OCI-LY7 (cell line): ENCODE measurements at regions of chr3 and their contacts with region 1.

Region 1: DNA sequence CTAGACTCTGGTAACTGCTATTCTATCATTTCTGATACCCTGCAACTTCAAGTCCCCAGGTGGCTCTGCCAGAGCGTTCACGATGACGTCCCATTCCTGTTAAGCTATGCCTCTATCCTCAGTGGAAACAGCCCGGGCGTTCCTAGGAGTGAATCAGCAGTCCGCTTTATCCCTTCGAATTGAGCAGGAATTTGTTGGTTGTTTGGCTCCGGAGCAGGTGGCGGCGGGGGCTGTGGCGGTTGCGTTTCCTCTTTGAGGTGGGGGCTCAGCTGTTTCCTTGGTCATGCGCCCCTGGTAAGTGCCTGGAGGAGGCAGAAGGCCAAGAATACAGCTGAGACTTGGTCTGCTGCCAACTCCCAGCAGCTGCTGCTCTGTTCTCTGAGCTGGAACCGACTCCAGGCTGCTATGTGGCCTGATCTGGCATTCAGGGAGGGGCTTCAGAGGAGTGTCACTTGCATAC is 25.2 kb downstream of the ARPP21 start:
- DNase-seq: peak; percentile 97
- H3K4me3 ChIP-seq: peak overlapping the region; percentile 49
- H3K27ac ChIP-seq: peak overlapping the region; percentile 92
- H3K4me1 ChIP-seq: peaks cover 82% of the 10 kb centered on the region
- CTCF ChIP-seq: no peak

Region 2: GRCh38 chr3:34869696-34870095 is 794.8 kb before region 1 on chr3:
- CTCF ChIA-PET with region 1: no interaction called
- POLR2A ChIA-PET with region 1: no interaction called
- intact Hi-C with region 1: loop called (anchors 10 kb)
- DNase-seq: no peak
- H3K4me3 ChIP-seq: no peak overlapping the region
- H3K27ac ChIP-seq: no peak overlapping the region
- H3K4me1 ChIP-seq: peaks cover 7% of the 10 kb centered on the region
- CTCF ChIP-seq: no peak

Region 3: GRCh38 chr3:35639254-35640186 is 25.0 kb before region 1 on chr3 and contains the start of gene ARPP21:
- CTCF ChIA-PET with region 1: interaction called, 3 read pairs
- POLR2A ChIA-PET with region 1: no interaction called
- intact Hi-C with region 1: loop called (anchors 2 kb)
- DNase-seq: peak; percentile 61
- H3K4me3 ChIP-seq: peak within 1 kb of the TSS; percentile 68
- H3K27ac ChIP-seq: no peak within 1 kb of the TSS
- H3K4me1 ChIP-seq: peaks cover 38% of the 10 kb centered on the region
- CTCF ChIP-seq: no peak
- total RNA-seq, gene ARPP21: 0.88 and 1.0 TPM in 2 replicates

Region 4: GRCh38 chr3:35678643-35679161 is 14.2 kb after region 1 on chr3:
- CTCF ChIA-PET with region 1: no interaction called
- POLR2A ChIA-PET with region 1: interaction called, 26 read pairs
- intact Hi-C with region 1: loop called (anchors 1 kb)
- DNase-seq: peak; percentile 13
- H3K4me3 ChIP-seq: peak overlapping the region; percentile 45
- H3K27ac ChIP-seq: no peak overlapping the region
- H3K4me1 ChIP-seq: peaks cover 66% of the 10 kb centered on the region
- CTCF ChIP-seq: no peak

Region 5: DNA sequence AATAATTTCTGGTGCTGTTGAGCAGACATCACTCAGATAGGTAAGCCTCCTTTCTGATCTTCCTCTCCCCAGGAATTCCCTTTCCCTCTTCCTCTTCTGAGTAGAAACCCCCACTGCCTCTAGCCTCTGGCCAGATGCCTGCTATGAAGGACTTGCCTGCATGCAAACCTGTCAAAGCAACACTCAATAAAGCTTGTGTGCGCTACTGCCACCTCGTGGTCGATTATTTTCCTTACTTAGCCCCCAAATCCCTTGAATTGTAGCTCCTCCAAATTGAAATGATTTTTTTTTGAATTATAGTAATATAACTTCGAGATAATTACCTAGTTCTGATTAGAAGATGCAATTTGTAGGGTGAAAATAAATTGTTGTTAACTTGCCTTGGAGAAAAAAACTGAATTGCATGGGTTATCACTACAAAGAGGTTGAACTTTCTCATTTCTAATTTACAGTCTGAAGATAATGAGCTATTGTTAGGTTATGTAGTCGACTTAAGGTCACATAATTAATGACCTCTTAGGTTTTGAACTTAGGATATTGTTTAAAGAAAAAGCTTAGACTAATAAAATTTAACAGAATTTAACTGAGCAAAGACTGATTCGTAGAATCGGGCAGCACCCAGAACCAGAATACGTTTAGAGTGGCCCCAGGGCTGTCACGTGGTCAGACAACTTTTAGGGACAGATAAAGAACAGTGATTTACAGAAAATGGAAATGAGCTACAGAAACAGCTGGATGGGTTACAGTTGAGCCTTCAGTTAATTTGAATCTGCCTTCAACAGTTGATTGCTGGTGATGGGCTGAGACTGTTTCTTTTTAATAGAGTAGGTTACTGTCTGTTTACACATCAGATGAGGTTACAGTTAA is 244.1 kb after region 1 on chr3:
- CTCF ChIA-PET with region 1: no interaction called
- POLR2A ChIA-PET with region 1: no interaction called
- intact Hi-C with region 1: loop called (anchors 10 kb)
- DNase-seq: peak; percentile 76
- H3K4me3 ChIP-seq: no peak overlapping the region
- H3K27ac ChIP-seq: no peak overlapping the region
- H3K4me1 ChIP-seq: no peaks in the 10 kb centered on the region
- CTCF ChIP-seq: peak; percentile 94